SK-N-SH (cell line): ENCODE measurements at regions of chr11 and their contacts with region 1.

Region 1: GRCh38 chr11:117489999-117490679 is 162.5 kb downstream of the CEP164 start:
- DNase-seq: peak; percentile 75
- H3K4me3 ChIP-seq: no peak overlapping the region; a peak in 1 of 4 replicates
- H3K27ac ChIP-seq: peak overlapping the region in 1 of 2 experiments; percentile 98; a peak in 2 of 4 replicates
- H3K4me1 ChIP-seq: peaks cover 0 to 74% of the 10 kb centered on the region in 2 experiments; a peak in 1 of 4 replicates
- H3K27me3 ChIP-seq: no peaks in the 10 kb centered on the region; the same call in 1 of the 2 replicates
- CTCF ChIP-seq: no peak
- EP300 ChIP-seq: peak in 1 of 2 experiments; percentile 89; a peak in 2 of 4 replicates
- RAD21 ChIP-seq: no peak

Region 2: GRCh38 chr11:117259417-117259816 is 230.7 kb before region 1 on chr11:
- CTCF ChIA-PET with region 1: no interaction called
- POLR2A ChIA-PET with region 1: no interaction called
- DNase-seq: no peak
- H3K4me3 ChIP-seq: no peak overlapping the region
- H3K27ac ChIP-seq: peak overlapping the region in 1 of 2 experiments; percentile 65; a peak in 2 of 4 replicates
- H3K4me1 ChIP-seq: peaks cover 0 to 4% of the 10 kb centered on the region in 2 experiments; a peak in 1 of 4 replicates
- H3K27me3 ChIP-seq: no peaks in the 10 kb centered on the region
- CTCF ChIP-seq: no peak
- EP300 ChIP-seq: peak in 1 of 2 experiments; percentile 34; a peak in 1 of 4 replicates
- RAD21 ChIP-seq: no peak

Region 3: DNA sequence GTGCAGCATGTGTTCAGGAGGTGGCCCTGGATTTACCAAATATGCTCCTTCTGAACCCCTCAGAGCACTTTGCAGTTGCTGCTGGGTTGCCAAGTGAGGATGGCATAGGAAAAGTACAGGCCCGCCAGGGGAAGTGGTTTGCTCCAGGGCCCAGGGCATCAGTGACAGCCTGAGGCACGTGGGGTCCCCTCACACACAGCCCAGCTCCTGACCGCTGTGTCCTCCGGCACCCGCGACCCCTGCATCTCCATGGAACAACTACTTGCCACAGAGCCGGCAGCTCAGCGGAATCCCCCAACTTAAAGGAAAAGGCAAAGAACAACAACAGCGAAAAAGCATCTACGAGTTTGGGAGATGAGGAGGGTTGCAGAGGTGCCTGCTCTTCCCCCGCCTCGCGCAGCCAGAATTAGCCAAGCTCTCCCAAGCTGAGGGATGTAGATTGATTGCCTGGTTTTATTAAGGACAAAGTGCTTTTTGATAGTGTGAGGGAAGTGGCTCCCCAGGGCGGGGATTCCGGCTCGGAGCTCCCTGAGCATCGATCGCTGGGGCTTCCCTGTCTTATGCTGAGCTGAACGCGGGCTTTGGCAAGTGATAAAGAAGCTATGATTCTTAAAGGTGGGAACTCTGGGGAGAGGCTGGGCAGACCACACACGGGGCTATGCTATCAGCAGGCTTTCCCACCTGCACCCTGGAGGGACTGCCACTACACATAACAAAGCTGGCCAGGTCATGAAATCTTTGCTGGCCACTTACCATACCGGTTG is 12.1 kb after region 1 on chr11:
- CTCF ChIA-PET with region 1: interaction called, 4 read pairs
- POLR2A ChIA-PET with region 1: interaction called, 16 read pairs
- DNase-seq: no peak
- H3K4me3 ChIP-seq: no peak overlapping the region
- H3K27ac ChIP-seq: peak overlapping the region in 1 of 2 experiments; percentile 48; a peak in 1 of 4 replicates
- H3K4me1 ChIP-seq: peaks cover 0 to 53% of the 10 kb centered on the region in 2 experiments; a peak in 1 of 4 replicates
- H3K27me3 ChIP-seq: peaks cover 8% of the 10 kb centered on the region; the same call in 1 of the 2 replicates
- CTCF ChIP-seq: no peak
- EP300 ChIP-seq: no peak
- RAD21 ChIP-seq: no peak

Region 4: GRCh38 chr11:117643606-117644300 is 153.6 kb after region 1 on chr11:
- CTCF ChIA-PET with region 1: no interaction called
- POLR2A ChIA-PET with region 1: no interaction called
- DNase-seq: no peak
- H3K4me3 ChIP-seq: no peak overlapping the region
- H3K27ac ChIP-seq: no peak overlapping the region
- H3K4me1 ChIP-seq: peaks cover 0 to 6% of the 10 kb centered on the region in 2 experiments; a peak in 1 of 4 replicates
- H3K27me3 ChIP-seq: 0 out of 2 replicates have a peak, but pooled peaks cover 5% of the 10 kb centered on the region
- CTCF ChIP-seq: no peak
- EP300 ChIP-seq: no peak
- RAD21 ChIP-seq: no peak